ENCODE measurements at regions of chr6 and their contacts with region 1.

Region 1: GRCh38 chr6:27902335-27903314 is 9.6 kb downstream of the OR2B2 start:
- DNase-seq: peak; percentile 78 to 95 (median 88)
- ATAC-seq: peak; percentile 86
- H3K4me3 ChIP-seq: peak overlapping the region; percentile 60
- H3K4me3 Mint-ChIP-seq: peak overlapping the region; percentile 98
- H3K27ac ChIP-seq: peak overlapping the region; percentile 71 to 72
- H3K27ac Mint-ChIP-seq: peak overlapping the region; percentile 100
- H3K4me1 ChIP-seq: peaks cover 7% of the 10 kb centered on the region
- H3K4me1 Mint-ChIP-seq: peaks cover 16% of the 10 kb centered on the region
- H3K27me3 ChIP-seq: no peaks in the 10 kb centered on the region
- H3K27me3 Mint-ChIP-seq: peaks cover 23% of the 10 kb centered on the region
- CTCF ChIP-seq: no peak

Region 2: GRCh38 chr6:27479319-27480182 is 423.1 kb before region 1 on chr6:
- CTCF ChIA-PET with region 1: no interaction called
- POLR2A ChIA-PET with region 1: interaction called, 7 read pairs
- intact Hi-C with region 1: loop called in 1 of 2 experiments (anchors 5 kb)
- DNase-seq: peak; percentile 82 to 94 (median 90)
- ATAC-seq: peak; percentile 71
- H3K4me3 ChIP-seq: peak overlapping the region; percentile 62
- H3K4me3 Mint-ChIP-seq: no peak overlapping the region
- H3K27ac ChIP-seq: peak overlapping the region; percentile 93 to 94
- H3K27ac Mint-ChIP-seq: no peak overlapping the region
- H3K4me1 ChIP-seq: peaks cover 16% of the 10 kb centered on the region
- H3K4me1 Mint-ChIP-seq: peaks cover 3% of the 10 kb centered on the region
- H3K27me3 ChIP-seq: no peaks in the 10 kb centered on the region
- H3K27me3 Mint-ChIP-seq: no peaks in the 10 kb centered on the region
- CTCF ChIP-seq: no peak

Region 3: DNA sequence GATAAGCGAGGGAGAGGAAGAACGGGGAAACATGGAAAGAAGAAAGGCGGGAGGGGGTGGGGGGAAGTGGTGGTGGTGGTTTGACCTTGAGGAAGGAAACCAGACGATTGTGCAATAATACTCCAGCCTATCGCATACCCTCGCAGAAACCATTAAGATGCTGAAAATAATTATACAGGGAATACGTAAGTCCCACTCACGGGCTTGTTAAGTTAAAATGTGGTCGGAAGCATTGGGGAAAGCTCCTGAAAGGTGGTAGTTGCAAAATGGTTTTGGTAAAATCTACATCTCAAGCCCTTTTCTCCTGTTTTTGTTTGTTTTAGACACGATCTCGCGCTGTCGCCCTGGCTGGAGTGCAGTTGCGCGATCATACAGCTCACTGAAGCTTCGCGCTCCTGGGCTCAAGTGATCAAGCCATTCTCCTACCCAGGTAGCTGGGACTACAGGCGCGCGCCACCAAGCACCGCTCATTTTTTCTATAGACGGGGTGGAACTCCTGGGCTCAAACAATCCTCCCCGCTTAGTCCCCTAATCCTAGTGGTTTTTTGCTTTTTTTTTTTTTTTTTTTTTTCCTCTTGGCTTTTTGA is 300.9 kb before region 1 on chr6:
- CTCF ChIA-PET with region 1: no interaction called
- POLR2A ChIA-PET with region 1: no interaction called
- intact Hi-C with region 1: no loop called
- DNase-seq: peak in 1 of 14 experiments; percentile 12
- ATAC-seq: no peak
- H3K4me3 ChIP-seq: no peak overlapping the region
- H3K4me3 Mint-ChIP-seq: no peak overlapping the region
- H3K27ac ChIP-seq: no peak overlapping the region
- H3K27ac Mint-ChIP-seq: no peak overlapping the region
- H3K4me1 ChIP-seq: peaks cover 20% of the 10 kb centered on the region
- H3K4me1 Mint-ChIP-seq: peaks cover 22% of the 10 kb centered on the region
- H3K27me3 ChIP-seq: peaks cover 63 to 84% of the 10 kb centered on the region in 2 experiments
- H3K27me3 Mint-ChIP-seq: peaks cover 92% of the 10 kb centered on the region
- CTCF ChIP-seq: no peak

Region 4: DNA sequence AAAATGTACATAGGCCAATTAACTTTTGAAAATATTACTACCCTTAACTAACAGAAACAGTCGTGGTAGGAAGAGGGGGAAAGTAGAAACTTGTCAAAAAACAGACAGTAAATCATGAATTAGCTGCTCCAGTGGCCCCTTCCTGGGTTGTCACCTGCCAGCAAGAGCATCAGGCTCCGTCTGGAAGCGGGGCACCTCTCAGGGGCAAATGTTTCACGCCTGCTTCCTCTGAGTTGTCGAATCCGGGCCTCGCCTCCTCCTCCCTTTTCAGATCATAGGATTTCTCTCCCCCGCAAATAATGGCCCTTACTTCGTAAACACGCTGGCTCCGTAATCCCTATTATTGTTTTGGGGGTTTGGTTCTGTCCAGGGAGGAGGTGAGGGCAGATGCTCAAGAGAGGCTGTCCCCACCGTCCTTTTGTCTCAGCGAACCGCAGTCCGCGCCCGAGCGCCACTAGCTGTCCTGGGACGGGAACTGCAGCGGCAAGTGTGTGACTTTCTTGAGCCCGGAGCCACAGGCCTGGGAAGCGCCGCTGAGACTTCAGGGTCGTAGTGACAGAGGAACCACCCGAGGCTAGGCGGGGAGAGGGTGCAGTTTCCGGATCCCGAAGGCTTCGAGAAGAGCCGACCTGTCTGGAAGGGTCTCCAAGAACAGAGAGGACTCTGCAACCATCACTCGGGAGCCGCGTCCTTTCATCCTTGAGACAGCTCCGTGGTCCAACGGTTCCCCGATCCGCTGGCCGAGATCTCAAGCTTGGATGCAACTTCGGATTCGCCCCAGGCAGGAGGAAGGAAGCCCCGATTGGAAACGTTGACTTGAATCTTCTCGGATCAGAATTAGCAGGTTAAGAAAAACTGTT is 215.2 kb before region 1 on chr6:
- CTCF ChIA-PET with region 1: no interaction called
- POLR2A ChIA-PET with region 1: no interaction called
- intact Hi-C with region 1: loop called (anchors 5 kb)
- DNase-seq: peak; percentile 53 to 87 (median 68)
- ATAC-seq: peak; percentile 74
- H3K4me3 ChIP-seq: peak overlapping the region; percentile 88
- H3K4me3 Mint-ChIP-seq: peak overlapping the region; percentile 95
- H3K27ac ChIP-seq: peak overlapping the region in 1 of 2 donors; percentile 37
- H3K27ac Mint-ChIP-seq: peak overlapping the region; percentile 97
- H3K4me1 ChIP-seq: peaks cover 14% of the 10 kb centered on the region
- H3K4me1 Mint-ChIP-seq: peaks cover 38% of the 10 kb centered on the region
- H3K27me3 ChIP-seq: peaks cover 5 to 9% of the 10 kb centered on the region in 2 experiments
- H3K27me3 Mint-ChIP-seq: peaks cover 40% of the 10 kb centered on the region
- CTCF ChIP-seq: peak; percentile 66

Region 5: GRCh38 chr6:27864906-27865849 is 37.4 kb before region 1 on chr6:
- CTCF ChIA-PET with region 1: interaction called, 50 read pairs
- POLR2A ChIA-PET with region 1: interaction called, 1,297 read pairs
- intact Hi-C with region 1: loop called in 1 of 2 experiments (anchors 5 kb)
- DNase-seq: peak in 13 of 14 experiments; percentile 35 to 97 (median 61)
- ATAC-seq: peak; percentile 83
- H3K4me3 ChIP-seq: peak overlapping the region; percentile 59
- H3K4me3 Mint-ChIP-seq: peak overlapping the region; percentile 100
- H3K27ac ChIP-seq: peak overlapping the region; percentile 54 to 78
- H3K27ac Mint-ChIP-seq: peak overlapping the region; percentile 93
- H3K4me1 ChIP-seq: peaks cover 38% of the 10 kb centered on the region
- H3K4me1 Mint-ChIP-seq: peaks cover 41% of the 10 kb centered on the region
- H3K27me3 ChIP-seq: no peaks in the 10 kb centered on the region
- H3K27me3 Mint-ChIP-seq: peaks cover 3% of the 10 kb centered on the region
- CTCF ChIP-seq: no peak

Region 6: DNA sequence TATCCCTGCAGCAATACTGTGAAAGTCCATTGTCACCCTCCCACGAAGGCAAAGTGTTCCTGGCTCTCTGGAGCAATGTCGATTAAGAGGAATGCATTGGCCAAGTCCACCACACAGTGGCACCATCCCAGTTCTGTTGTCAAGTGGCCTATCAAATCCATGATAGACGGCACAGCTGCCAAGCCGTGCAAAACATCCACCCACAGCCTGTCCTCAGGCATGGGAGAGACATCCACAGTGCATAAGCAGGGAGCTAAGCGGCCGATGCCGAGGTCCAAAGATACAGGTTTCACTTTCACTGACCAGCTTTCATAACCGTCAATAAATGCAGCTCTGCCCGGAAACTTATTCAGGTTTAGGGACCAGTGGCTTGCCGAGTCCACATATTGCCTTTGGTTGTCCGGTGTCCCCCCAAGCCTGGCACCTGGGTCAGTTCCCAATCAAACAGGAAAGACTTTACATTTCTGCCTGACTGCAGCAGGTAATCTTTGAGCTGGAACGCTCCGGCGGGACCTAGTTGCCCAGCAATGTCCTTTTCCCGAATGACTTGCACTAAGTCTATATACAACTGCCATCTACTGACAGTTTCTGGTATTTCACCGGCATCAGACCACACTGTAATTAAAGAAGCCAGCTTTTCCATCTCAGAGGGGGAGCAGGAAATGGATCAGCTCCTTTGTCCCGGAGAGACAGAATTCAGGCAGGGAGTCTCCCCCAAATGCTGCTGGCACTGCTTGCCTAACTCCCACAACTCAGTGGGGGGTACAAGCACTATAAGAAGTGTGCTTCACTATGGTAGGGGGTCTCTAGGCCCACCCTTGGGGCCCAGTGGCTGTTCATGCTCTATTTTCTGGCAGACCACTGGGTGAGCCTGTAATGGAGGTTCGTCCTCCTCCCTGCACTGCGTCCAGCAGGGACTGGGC is 453.4 kb after region 1 on chr6:
- CTCF ChIA-PET with region 1: no interaction called
- POLR2A ChIA-PET with region 1: no interaction called
- intact Hi-C with region 1: loop called (anchors 5 kb)
- DNase-seq: peak; percentile 26 to 84 (median 42)
- ATAC-seq: peak; percentile 93
- H3K4me3 ChIP-seq: peak overlapping the region; percentile 64
- H3K4me3 Mint-ChIP-seq: peak overlapping the region; percentile 90
- H3K27ac ChIP-seq: no peak overlapping the region
- H3K27ac Mint-ChIP-seq: peak overlapping the region; percentile 22
- H3K4me1 ChIP-seq: peaks cover 21% of the 10 kb centered on the region
- H3K4me1 Mint-ChIP-seq: peaks cover 42% of the 10 kb centered on the region
- H3K27me3 ChIP-seq: no peaks in the 10 kb centered on the region
- H3K27me3 Mint-ChIP-seq: no peaks in the 10 kb centered on the region
- CTCF ChIP-seq: peak; percentile 77

Region 7: GRCh38 chr6:28725890-28726348 is 823.3 kb after region 1 on chr6:
- CTCF ChIA-PET with region 1: no interaction called
- POLR2A ChIA-PET with region 1: no interaction called
- intact Hi-C with region 1: no loop called
- DNase-seq: no peak
- ATAC-seq: no peak
- H3K4me3 ChIP-seq: no peak overlapping the region
- H3K4me3 Mint-ChIP-seq: no peak overlapping the region
- H3K27ac ChIP-seq: no peak overlapping the region
- H3K27ac Mint-ChIP-seq: no peak overlapping the region
- H3K4me1 ChIP-seq: peaks cover 9% of the 10 kb centered on the region
- H3K4me1 Mint-ChIP-seq: peaks cover 22% of the 10 kb centered on the region
- H3K27me3 ChIP-seq: peaks cover 36 to 73% of the 10 kb centered on the region in 2 experiments
- H3K27me3 Mint-ChIP-seq: peaks cover 98% of the 10 kb centered on the region
- CTCF ChIP-seq: no peak